ENCODE measurements at regions of chr2 and their contacts with region 1.

Region 1: GRCh38 chr2:64036034-64036705 is 16.9 kb upstream of the VPS54 start:
- DNase-seq: peak; percentile 24
- ATAC-seq: peak; percentile 88
- H3K4me3 Mint-ChIP-seq: peak overlapping the region; percentile 40
- H3K27ac Mint-ChIP-seq: peak overlapping the region; percentile 64
- H3K4me1 Mint-ChIP-seq: peaks cover 55% of the 10 kb centered on the region
- H3K27me3 Mint-ChIP-seq: peaks cover 2% of the 10 kb centered on the region

Region 2: GRCh38 chr2:63698825-63699548 is 337.2 kb before region 1 on chr2:
- CTCF ChIA-PET with region 1: no interaction called
- POLR2A ChIA-PET with region 1: no interaction called
- intact Hi-C with region 1: loop called in 1 of 2 experiments (anchors 10 kb)
- DNase-seq: no peak
- ATAC-seq: peak; percentile 84
- H3K4me3 Mint-ChIP-seq: no peak overlapping the region
- H3K27ac Mint-ChIP-seq: no peak overlapping the region
- H3K4me1 Mint-ChIP-seq: no peaks in the 10 kb centered on the region
- H3K27me3 Mint-ChIP-seq: no peaks in the 10 kb centered on the region

Region 3: GRCh38 chr2:64101141-64101591 is 65.0 kb after region 1 on chr2:
- CTCF ChIA-PET with region 1: no interaction called
- POLR2A ChIA-PET with region 1: no interaction called
- intact Hi-C with region 1: loop called (anchors 1 kb)
- DNase-seq: no peak
- ATAC-seq: peak; percentile 86
- H3K4me3 Mint-ChIP-seq: peak overlapping the region; percentile 3
- H3K27ac Mint-ChIP-seq: peak overlapping the region; percentile 51
- H3K4me1 Mint-ChIP-seq: peaks cover 54% of the 10 kb centered on the region
- H3K27me3 Mint-ChIP-seq: no peaks in the 10 kb centered on the region

Region 4: GRCh38 chr2:64133828-64134227 is 97.7 kb after region 1 on chr2:
- CTCF ChIA-PET with region 1: no interaction called
- POLR2A ChIA-PET with region 1: no interaction called
- intact Hi-C with region 1: loop called in 1 of 2 experiments (anchors 1 kb)
- DNase-seq: no peak
- ATAC-seq: peak; percentile 71
- H3K4me3 Mint-ChIP-seq: peak overlapping the region; percentile 11
- H3K27ac Mint-ChIP-seq: peak overlapping the region; percentile 72
- H3K4me1 Mint-ChIP-seq: peaks cover 87% of the 10 kb centered on the region
- H3K27me3 Mint-ChIP-seq: no peaks in the 10 kb centered on the region

Region 5: DNA sequence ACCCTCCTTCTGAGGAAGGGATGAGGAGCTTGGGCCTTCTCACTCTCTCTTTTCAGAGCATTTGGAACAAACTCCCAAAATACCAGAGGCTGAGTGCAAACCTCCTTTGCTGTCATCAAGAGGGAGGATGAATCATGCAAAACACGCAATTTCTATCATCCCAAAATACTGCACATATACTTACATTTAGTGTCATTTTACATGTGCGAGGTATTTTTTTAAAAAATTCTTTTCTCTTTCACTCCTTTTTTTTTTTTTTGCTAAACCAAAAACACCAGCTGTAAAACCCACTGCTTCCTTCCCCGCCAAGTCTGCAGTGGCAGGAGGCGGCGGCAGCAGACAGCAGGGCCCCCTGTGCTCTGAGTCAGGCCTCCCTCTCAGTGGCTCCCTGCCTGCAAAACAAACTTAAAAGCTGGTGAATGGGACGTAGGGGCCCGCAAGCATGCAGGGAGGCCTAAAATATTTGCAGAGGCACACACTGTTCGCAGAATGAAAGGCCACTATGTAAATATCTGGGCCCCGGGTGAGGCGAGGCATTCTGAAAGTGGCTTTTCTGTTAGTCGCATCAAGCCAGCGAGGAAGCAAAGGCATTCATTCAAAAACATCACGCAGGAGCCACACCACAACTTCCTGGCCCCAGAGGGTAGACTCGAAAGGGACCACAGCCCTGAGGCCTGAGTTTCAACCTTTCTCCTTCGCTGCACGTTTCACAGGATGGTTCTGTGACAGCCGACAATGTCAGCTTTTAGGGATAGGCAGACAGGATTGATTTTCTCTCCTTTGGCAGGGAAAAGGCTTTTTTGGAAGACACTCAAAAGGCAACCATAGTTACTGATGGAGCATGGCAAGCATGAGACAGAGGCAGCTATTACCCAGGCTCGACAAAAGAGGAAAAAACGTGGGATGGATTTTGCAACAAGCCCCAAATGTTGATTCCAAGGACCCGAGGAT is 1264.9 kb after region 1 on chr2:
- CTCF ChIA-PET with region 1: no interaction called
- POLR2A ChIA-PET with region 1: no interaction called
- intact Hi-C with region 1: loop called in 1 of 2 experiments (anchors 10 kb)
- DNase-seq: peak; percentile 90
- ATAC-seq: peak; percentile 92
- H3K4me3 Mint-ChIP-seq: peak overlapping the region; percentile 52
- H3K27ac Mint-ChIP-seq: peak overlapping the region; percentile 79
- H3K4me1 Mint-ChIP-seq: peaks cover 48% of the 10 kb centered on the region
- H3K27me3 Mint-ChIP-seq: peaks cover 13% of the 10 kb centered on the region

Measured in activated CD4-positive, alpha-beta T cell treated with anti-CD3 and anti-CD28 coated beads for 36 hours (primary cell).